Mucosa of descending colon (tissue), 3 donors: ENCODE measurements at regions of chr18 and their contacts with region 1.

Region 1: DNA sequence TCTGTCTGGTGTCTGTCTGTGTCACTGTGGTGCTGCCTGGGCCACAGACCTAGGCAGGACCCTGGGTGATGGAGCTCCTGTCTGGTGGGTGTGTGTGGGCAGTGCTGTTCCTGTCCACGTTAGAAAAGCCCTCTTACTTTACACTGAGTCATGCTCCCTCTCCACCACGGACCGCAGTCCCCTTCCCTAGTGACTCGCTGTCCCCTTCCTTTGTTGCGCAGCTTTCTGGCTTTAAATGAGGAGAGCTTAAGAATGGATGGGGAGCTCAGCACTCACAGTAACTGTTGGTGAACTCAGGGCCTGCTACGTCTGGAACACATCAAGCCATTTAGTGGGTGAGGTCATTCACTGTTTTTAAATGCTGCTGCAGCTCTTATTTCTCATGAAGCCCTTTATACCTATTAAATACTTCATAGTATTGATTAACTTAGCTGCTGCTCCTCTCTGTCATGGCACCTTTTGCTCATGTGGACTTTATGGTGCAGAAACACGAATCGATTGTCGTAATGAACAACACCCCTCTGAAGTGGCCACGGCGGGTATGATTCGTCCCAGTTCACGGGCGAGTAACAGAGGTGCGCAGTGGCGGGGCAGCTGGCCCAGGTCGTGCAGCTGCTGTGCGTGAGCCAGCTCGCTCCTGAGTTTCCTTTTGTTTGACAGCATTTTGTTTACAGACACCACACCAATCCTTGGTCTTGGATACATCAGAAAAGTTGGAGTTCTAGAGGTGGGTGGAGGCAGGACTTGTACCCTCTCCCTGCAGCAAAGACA is 100.4 kb downstream of the LDLRAD4 start:
- DNase-seq: no peak
- ATAC-seq: no peak
- H3K4me3 ChIP-seq: no peak overlapping the region
- H3K4me1 ChIP-seq: no peaks in the 10 kb centered on the region
- CTCF ChIP-seq: no peak

Region 2: DNA sequence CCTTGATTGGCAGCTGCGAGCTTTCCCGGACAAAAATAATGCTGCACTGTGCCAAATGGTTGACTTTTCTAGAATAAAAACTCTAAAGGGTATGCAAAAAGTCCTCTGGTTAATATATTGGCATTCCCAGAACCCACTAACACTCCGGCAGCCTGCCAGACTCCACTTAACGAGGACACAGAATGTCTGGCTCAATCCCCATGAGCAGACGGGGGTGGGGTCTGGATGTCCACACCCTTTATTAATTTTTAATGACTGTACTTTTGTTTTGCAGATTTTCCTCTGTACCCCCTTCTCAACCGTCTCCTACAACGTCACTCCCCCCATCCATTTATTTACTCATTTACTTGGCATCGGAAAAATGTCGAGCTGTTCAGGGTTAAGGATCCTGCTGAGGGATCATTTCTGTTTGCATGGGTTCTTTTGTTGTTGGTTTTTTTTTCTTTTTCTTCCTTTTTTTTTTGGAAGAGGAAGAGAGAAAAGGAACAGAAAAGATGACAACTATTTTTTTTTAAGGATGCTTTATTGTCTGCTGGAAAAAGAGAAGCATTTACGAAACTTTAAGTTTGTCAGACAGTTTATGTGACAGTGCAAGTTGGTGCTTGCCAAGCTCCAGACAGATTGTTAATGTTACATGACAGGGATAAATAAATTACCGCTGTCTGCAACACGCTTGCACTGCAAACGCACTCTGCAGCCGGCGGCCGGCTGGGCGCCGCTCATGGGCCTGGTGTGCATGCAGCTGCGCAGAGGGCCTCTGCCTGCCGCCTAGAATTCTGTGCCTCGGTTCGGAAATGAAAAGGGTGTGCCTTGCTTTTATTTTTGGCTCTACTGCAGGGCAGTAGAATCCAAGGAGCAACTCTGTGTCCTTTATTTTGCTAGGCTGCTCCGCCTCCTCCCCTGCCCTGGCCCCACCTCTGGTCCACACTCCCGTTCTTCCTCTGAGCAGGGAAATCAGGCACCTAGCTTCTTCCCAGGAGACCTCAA is 96.8 kb before region 1 on chr18:
- intact Hi-C with region 1: loop called in 1 of 2 experiments (anchors 10 kb)
- DNase-seq: peak; percentile 68 to 83 (median 79)
- ATAC-seq: peak; percentile 45
- H3K4me3 ChIP-seq: no peak overlapping the region
- H3K4me1 ChIP-seq: peaks cover 56% of the 10 kb centered on the region
- CTCF ChIP-seq: no peak

Region 3: DNA sequence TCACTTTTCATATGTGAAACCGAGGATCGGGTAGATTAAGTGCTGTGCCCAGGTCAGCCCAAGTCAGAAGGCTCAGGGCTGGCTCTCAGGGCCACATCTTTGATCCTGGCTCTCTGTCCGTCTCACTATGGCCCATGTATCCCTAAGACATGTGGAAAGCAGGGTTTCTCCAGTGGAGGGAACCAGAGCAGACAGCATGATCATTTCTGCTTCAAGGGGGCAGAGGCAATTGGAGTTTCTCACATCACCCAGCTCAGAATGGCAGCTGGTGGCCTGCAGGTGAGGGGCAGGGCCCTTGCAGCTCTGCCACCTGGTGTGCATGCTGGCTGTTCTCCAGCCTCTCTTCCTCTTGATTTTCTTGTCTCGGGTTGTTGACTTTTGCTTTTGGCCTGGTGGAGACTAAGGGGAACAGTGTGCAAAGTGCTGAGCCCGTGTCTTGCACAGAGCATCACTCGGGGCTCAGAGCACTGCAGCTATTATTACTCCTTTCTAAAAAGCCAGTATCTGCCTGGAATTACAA is 73.4 kb before region 1 on chr18:
- intact Hi-C with region 1: no loop called
- DNase-seq: peak in 1 of 3 donors; percentile 44
- ATAC-seq: peak; percentile 78
- H3K4me3 ChIP-seq: no peak overlapping the region
- H3K4me1 ChIP-seq: no peaks in the 10 kb centered on the region
- CTCF ChIP-seq: no peak

Region 4: DNA sequence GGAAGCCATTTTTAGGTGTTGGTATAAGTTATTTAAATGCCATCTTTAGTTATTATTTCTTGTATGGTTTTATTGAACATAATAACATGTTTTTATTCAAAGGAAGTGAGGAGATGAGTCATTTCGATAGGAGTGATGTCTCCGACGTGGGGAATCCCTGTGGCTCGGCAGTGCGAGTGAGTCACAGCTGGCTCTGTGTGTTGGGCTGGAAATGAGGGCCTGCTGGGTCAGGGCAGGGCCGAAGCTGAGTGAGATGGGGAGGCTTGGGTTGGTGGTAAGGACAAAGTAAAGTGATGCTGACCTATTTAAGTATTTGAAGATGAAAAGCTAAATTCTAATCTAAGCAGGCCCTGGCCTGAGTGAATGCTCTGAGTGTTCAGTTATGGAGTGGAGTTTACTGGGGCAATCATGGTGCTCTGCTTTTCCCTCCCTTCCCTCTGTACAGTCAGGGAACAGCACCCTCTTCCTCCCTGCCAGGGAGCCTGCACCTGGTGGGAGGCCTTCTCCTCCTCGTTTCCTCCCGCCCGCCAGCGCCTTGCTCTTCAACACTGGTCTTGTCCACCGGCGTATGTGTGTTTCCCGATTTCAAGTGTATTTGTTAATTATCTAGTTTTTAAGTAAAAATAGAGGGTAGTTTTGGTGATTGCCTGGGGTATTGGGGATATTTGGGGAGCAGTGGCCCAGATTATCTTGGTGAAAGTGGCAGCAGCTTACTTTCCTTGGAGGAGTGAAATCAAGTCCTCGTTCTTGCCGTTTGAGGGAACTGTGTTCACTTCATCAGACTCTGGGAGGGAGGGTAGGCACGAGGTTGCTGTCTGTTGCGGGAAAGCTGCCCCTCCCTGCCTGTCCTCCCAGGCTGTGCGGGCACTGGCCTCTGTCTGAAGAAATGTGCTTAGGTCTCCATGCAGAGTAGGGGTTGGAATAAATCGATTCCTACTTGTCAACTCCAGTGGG is 56.7 kb after region 1 on chr18:
- intact Hi-C with region 1: loop called in 1 of 2 experiments (anchors 10 kb)
- DNase-seq: peak; percentile 51 to 79 (median 53)
- ATAC-seq: peak; percentile 60
- H3K4me3 ChIP-seq: no peak overlapping the region
- H3K4me1 ChIP-seq: peaks cover 15% of the 10 kb centered on the region
- CTCF ChIP-seq: no peak

Region 5: DNA sequence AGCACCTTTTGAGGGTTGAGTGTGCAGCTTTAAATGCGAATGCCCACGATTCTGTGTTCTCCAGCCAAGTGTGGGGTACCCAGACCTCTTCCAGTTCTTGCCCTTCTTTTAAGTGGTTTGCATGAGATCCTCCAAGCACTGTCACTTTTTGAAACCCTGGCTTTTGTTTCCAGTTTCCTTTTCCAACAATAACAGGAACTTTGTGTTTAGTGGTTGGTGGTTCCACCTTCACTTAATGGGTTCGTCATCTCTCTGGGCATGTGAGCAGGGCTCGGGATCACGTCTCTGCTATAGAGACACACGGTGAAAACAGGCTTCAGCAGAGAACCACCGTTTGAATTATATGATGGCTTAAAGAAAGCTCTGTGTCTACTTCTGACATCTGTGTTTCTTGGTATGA is 97.3 kb after region 1 on chr18:
- intact Hi-C with region 1: no loop called
- DNase-seq: no peak
- ATAC-seq: no peak
- H3K4me3 ChIP-seq: no peak overlapping the region
- H3K4me1 ChIP-seq: peaks cover 19% of the 10 kb centered on the region
- CTCF ChIP-seq: no peak

Region 6: DNA sequence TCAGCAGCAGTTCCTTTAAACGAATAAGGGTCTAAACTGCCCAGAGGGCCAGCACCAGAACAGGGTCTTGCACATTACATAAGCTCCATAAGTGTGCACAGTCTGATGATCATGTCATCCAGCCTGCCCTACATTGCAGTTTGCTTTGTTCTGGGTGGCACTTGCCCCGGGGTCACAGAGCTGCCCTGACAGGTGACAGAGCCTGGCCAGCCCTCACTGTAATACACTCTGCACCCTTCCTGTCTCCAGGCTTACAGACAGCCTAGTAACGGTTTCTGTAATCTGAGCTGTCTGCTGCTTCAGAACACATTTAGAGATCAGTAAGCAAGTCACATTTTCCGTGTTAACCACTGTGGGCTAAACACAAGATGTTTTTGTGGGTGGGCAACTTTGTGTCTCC is 194.1 kb after region 1 on chr18:
- intact Hi-C with region 1: no loop called
- DNase-seq: no peak
- ATAC-seq: peak; percentile 50
- H3K4me3 ChIP-seq: no peak overlapping the region
- H3K4me1 ChIP-seq: no peaks in the 10 kb centered on the region
- CTCF ChIP-seq: no peak